OCI-LY7 (cell line): ENCODE measurements at regions of chr18 and their contacts with region 1.

Region 1: DNA sequence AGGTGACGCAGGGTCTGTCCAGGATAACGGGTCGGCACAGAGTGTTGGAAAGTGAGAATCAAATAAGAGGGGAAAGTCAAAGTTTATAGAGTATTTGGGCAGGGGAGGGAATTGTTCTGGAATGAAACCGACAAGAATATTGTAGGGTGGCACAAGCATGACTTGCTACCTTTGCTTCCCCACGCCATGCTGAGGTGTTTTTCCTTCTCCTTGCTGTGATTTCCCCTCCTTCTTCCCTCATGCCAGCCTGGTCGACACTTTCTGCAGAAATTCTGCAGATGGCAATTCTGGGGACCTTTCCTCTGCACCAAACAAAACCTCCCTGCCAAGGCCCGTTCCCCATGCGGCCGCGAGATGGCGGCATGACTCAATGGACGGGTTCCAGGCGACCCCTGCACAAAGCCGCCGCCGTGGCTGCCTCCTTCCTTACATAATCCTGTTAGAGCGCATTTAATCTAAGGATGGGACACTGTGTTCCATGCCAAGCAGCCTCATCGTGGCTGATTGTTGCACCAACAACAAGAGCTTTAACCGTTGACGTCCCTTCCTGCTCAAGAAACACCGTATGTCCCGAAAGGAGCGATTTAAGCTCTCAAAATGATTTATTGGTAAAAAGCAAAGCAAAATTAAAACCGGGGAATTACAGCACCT is at the start of gene MRO:
- DNase-seq: peak; percentile 75
- H3K4me3 ChIP-seq: peak within 1 kb of the TSS; percentile 53
- H3K27ac ChIP-seq: peak within 1 kb of the TSS; percentile 15
- H3K4me1 ChIP-seq: peaks cover 46% of the 10 kb centered on the region
- CTCF ChIP-seq: peak; percentile 84
- total RNA-seq, gene MRO: 0.22 and 1.0 TPM in 2 replicates

Region 2: GRCh38 chr18:50866765-50867164 is 46.9 kb after region 1 on chr18:
- CTCF ChIA-PET with region 1: interaction called, 3 read pairs
- POLR2A ChIA-PET with region 1: interaction called, 4 read pairs
- intact Hi-C with region 1: loop called (anchors 1 kb)
- DNase-seq: peak; percentile 38
- H3K4me3 ChIP-seq: no peak overlapping the region
- H3K27ac ChIP-seq: no peak overlapping the region
- H3K4me1 ChIP-seq: peaks cover 8% of the 10 kb centered on the region
- CTCF ChIP-seq: peak; percentile 60

Region 3: DNA sequence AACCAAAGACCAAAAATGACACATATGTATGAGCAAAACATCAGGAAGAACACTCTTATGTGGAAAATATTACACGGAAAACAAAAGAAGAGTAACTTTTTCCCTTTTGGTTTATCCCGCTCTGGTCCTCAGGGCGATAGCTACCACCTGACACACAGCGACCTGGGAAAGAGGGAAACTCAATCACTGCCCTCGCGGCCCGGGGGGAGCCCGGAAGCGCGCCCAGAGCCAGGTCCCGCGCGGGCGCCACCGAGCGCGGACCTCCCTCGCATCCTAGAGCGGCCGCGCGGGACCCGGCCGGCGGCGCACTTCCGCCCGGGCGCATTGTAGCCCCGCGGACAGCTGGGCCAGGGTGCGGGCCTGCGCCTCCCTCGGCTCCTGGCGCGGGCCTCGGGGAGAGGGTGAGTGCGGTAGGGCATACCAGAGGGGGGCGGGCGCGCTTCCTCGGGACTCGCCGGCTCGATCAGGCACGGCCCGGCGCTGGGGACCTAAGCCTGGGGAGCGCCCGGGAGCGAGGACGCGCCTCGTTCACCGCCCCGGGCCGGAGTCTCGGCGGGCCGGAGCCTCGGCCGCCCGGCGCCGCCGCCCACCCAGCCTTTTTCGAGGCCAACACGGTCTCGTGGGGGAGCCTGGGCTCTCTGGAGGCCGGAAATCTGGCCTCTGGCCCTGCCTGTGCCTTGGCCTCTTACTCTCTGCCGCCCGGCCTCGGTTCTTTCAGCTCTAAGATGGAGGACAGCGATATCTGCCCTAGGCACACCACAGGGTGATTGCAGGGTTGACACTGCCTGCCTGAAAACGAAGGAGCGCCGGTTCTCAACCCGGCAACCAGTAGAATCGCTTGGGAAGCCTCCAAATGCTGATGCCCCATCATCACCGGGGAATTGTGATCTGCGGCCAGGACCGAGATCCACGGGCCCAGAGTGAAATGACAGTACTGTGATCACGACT is 148.1 kb after region 1 on chr18 and contains the start of gene ELAC1:
- CTCF ChIA-PET with region 1: no interaction called
- POLR2A ChIA-PET with region 1: no interaction called
- intact Hi-C with region 1: loop called (anchors 10 kb)
- DNase-seq: peak; percentile 77
- H3K4me3 ChIP-seq: peak within 1 kb of the TSS; percentile 85
- H3K27ac ChIP-seq: peak within 1 kb of the TSS; percentile 44
- H3K4me1 ChIP-seq: peaks cover 6% of the 10 kb centered on the region
- CTCF ChIP-seq: no peak
- total RNA-seq, gene ELAC1: 1.5 and 2.9 TPM in 2 replicates

Region 4: DNA sequence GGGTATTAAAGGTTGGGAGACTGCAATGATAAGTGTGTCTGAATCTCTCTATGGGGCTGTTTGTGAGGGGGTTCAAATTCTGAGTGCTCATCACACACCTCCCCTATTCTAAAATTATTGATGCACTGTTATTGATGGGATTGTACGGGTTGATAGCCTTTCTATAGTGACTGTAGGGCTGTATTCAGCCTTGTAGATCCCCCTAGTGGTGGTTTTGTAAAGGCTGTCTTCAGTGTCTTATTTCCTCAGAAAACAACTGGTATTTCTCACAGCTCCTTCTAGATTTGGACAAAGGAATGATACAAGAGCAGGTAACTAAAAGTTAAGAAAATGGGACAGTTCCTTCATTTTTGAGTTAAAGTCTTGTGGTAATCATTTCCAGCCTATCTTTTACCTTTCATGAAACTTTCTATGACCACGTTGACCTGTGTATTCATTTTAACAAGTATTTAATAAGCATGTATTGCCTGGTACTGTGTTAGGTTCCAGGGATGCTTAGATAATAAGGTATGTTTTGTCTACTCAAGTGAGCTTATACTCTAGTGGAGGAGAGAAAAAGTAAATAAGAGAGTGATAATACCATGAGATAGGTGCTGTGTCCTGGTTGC is 231.4 kb after region 1 on chr18:
- CTCF ChIA-PET with region 1: no interaction called
- POLR2A ChIA-PET with region 1: interaction called, 3 read pairs
- intact Hi-C with region 1: loop called (anchors 1 kb)
- DNase-seq: peak; percentile 60
- H3K4me3 ChIP-seq: no peak overlapping the region
- H3K27ac ChIP-seq: no peak overlapping the region
- H3K4me1 ChIP-seq: peaks cover 6% of the 10 kb centered on the region
- CTCF ChIP-seq: peak; percentile 83